GM10248 (cell line): ENCODE measurements at regions of chr10 and their contacts with region 1.

Region 1: DNA sequence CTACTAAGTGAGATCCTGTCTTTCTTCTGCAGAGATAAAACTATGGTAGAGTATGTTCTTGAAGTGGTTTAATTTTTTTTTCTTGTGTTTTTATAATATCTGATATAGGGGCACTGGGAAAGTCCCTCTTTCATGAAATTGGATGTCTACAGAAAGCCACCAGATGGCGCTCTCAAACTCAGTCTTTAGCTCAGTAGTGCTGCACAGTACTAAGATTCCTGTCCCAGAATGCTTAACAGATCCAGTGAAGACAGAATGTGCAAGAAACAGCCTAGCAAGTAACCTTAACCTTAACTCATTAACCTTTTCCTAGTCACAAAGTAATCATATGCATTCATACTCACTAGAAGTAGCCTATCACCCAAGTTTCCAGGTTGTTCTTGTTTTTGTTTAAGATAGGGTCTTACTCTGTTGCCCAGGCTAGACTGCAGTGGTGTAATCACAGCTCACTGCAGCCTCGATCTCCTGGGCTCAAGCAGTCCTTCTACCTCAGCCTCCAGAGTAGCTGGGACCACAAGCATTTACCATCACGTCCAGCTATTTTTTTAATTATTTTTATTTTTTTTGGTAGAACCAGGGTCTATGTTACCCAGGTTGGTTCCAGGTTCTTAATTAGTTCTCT is 56.7 kb downstream of the IDE start:
- DNase-seq: peak; percentile 70
- CTCF ChIP-seq: peak; percentile 75

Region 2: DNA sequence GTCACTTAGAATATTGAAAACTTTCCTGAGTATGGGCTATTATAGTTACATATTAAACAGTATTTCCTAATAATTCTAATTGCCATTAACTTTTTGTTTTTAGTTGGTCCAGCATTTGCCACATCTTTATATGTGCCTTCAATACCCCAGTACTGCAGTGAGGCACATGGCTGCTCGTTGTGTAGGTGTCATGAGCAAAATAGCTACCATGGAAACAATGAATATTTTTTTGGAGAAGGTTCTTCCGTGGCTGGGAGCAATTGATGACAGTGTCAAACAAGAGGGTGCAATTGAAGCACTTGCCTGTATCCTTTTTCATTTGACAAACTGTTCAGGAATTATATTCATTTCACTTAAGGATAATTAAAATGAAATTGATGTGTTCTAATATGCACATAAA is 520.9 kb before region 1 on chr10:
- CTCF ChIA-PET with region 1: no interaction called
- POLR2A ChIA-PET with region 1: no interaction called
- DNase-seq: no peak
- CTCF ChIP-seq: no peak

Region 3: GRCh38 chr10:92479547-92479946 is 37.6 kb before region 1 on chr10:
- CTCF ChIA-PET with region 1: interaction called, 12 read pairs
- POLR2A ChIA-PET with region 1: no interaction called
- DNase-seq: no peak
- CTCF ChIP-seq: no peak

Region 4: DNA sequence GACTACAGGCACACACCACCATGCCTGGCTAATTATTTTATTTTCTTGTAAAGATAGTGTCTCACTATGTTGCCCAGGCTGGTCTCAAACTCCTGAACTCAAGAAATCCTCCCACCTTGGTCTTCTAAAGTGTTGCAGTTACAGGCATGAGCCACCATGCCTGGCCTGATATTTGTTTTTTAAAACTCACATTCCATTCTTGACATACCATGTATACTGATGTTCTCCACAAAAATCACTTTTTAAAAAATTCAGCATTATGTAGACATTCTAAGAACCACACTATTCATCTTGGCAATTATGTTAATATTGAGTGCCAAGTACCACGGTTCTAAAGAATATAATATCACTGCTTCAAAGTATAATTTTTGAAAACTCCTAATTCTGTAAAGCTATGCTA is 13.3 kb after region 1 on chr10:
- CTCF ChIA-PET with region 1: interaction called, 45 read pairs
- POLR2A ChIA-PET with region 1: no interaction called
- DNase-seq: no peak
- CTCF ChIP-seq: no peak